Prostate gland (tissue), 2 donors: ENCODE measurements at regions of chr9 and their contacts with region 1.

Region 1: GRCh38 chr9:112379177-112380101 is 469 bp upstream of the HSDL2 start:
- DNase-seq: peak; percentile 99
- H3K4me3 ChIP-seq: peak overlapping the region; percentile 50 to 61
- H3K27ac ChIP-seq: peak overlapping the region; percentile 96 to 98
- H3K4me1 ChIP-seq: no peaks in the 10 kb centered on the region
- H3K27me3 ChIP-seq: no peaks in the 10 kb centered on the region
- CTCF ChIP-seq: peak in 2 of 4 experiments; percentile 23 to 26
- POLR2A ChIP-seq: peak; percentile 95

Region 2: GRCh38 chr9:112443200-112443599 is 63.8 kb after region 1 on chr9:
- intact Hi-C with region 1: loop called (anchors 5 kb)
- DNase-seq: no peak
- H3K4me3 ChIP-seq: no peak overlapping the region
- H3K27ac ChIP-seq: no peak overlapping the region
- H3K4me1 ChIP-seq: no peaks in the 10 kb centered on the region
- H3K27me3 ChIP-seq: no peaks in the 10 kb centered on the region
- CTCF ChIP-seq: peak in 3 of 4 experiments; percentile 21 to 47 (median 46)
- POLR2A ChIP-seq: no peak

Region 3: GRCh38 chr9:112486221-112487007 is 107.0 kb after region 1 on chr9 and contains the start of gene KIAA1958:
- intact Hi-C with region 1: loop called (anchors 5 kb)
- DNase-seq: peak; percentile 82
- H3K4me3 ChIP-seq: peak within 1 kb of the TSS; percentile 83 to 97
- H3K27ac ChIP-seq: peak within 1 kb of the TSS; percentile 80 to 82
- H3K4me1 ChIP-seq: no peaks in the 10 kb centered on the region
- H3K27me3 ChIP-seq: no peaks in the 10 kb centered on the region
- CTCF ChIP-seq: no peak
- POLR2A ChIP-seq: peak; percentile 57
- total RNA-seq, gene KIAA1958: 7.0 to 42.8 TPM

Region 4: DNA sequence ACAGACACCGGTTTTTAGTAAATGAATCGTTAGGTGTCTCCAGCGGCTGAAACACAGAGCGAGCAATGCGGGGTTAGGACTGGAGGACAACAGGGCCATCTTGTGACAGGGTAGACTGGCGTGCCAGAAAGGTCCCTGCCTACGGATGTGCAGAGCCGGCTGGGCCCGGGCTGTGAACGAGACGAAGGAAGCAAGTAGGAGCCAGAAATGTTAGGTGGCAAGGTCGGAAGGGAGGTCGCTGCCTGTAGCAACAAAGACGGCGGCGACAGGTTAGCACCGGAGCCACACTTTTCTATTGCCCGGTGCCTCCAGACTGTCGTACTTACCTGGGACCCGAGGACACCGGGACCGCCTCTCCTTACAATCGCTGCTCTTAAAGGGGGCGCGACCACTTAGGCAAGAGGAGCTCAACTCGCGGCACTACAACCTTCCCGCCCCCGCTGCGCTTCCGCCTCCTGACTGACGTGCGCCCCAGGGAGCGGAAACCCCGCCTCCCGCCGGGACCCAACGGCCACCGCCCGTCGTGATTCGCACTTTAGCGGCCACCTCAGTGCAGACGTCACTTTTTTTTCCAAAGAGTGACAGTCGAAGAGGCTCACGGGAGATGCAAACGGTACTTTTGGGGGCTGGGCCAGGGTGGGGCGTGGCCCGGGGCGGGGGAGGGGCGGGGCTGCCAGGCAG is 338.4 kb after region 1 on chr9 and contains the start of gene INIP:
- intact Hi-C with region 1: loop called (anchors 10 kb)
- DNase-seq: peak; percentile 95
- H3K4me3 ChIP-seq: peak within 1 kb of the TSS; percentile 63 to 74
- H3K27ac ChIP-seq: peak within 1 kb of the TSS; percentile 85 to 87
- H3K4me1 ChIP-seq: no peaks in the 10 kb centered on the region
- H3K27me3 ChIP-seq: no peaks in the 10 kb centered on the region
- CTCF ChIP-seq: peak in 3 of 4 experiments; percentile 13 to 29 (median 23)
- POLR2A ChIP-seq: peak; percentile 86
- total RNA-seq, gene INIP: 21.0 to 36.6 TPM

Region 5: GRCh38 chr9:112750111-112750767 is 370.8 kb after region 1 on chr9 and contains the start of gene SNX30:
- intact Hi-C with region 1: loop called (anchors 5 kb)
- DNase-seq: peak; percentile 85
- H3K4me3 ChIP-seq: peak within 1 kb of the TSS; percentile 57 to 97
- H3K27ac ChIP-seq: peak within 1 kb of the TSS; percentile 75 to 82
- H3K4me1 ChIP-seq: no peaks in the 10 kb centered on the region
- H3K27me3 ChIP-seq: no peaks in the 10 kb centered on the region
- CTCF ChIP-seq: peak in 2 of 4 experiments; percentile 13 to 15
- POLR2A ChIP-seq: peak; percentile 61
- total RNA-seq, gene SNX30: 6.3 to 38.7 TPM